Sigmoid colon (tissue), 7 donors: ENCODE measurements at regions of chr4 and their contacts with region 1.

Region 1: DNA sequence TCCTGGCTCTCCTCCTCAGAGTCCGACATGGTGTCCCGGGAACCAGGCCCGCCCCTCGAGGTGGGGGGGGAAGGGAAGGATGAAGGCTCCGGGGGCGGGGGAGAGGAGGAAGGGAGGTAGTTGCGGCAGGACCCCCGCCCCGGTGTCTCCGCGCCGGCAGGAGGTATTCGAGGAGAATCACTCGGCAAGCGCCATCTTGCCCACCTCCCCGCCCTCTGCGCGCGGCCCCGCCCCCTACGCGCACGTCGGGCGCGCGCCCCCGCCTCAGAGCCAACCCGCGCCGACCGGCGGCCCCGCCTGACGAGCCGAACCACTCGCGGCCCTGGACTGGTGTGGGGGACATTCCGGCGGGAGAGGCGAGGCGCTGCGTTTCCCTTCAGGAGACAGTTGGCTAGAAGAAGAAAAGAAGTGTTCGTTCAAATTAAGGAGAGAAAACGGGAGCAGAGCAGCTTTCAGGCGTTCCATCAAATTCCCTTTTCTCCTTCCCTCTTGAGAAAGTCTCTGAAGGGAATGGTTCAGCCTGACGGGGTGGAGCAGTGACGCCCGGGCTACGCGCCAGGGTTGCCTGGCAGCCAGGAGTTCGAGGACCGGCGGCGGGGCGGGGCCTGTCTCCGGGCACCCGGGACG is at the start of gene RAB28:
- DNase-seq: peak; percentile 98
- H3K4me3 ChIP-seq: peak within 1 kb of the TSS; percentile 80 to 92 (median 90)
- H3K27ac ChIP-seq: peak within 1 kb of the TSS; percentile 95 to 97 (median 96)
- H3K4me1 ChIP-seq: peaks cover 0 to 33% (median 17%) of the 10 kb centered on the region in 4 donors
- H3K27me3 ChIP-seq: no peaks in the 10 kb centered on the region
- CTCF ChIP-seq: no peak
- EP300 ChIP-seq: no peak
- POLR2A ChIP-seq: peak; percentile 45 to 68
- total RNA-seq, gene RAB28: 24.1 to 32.1 (median 28.7) TPM

Region 2: DNA sequence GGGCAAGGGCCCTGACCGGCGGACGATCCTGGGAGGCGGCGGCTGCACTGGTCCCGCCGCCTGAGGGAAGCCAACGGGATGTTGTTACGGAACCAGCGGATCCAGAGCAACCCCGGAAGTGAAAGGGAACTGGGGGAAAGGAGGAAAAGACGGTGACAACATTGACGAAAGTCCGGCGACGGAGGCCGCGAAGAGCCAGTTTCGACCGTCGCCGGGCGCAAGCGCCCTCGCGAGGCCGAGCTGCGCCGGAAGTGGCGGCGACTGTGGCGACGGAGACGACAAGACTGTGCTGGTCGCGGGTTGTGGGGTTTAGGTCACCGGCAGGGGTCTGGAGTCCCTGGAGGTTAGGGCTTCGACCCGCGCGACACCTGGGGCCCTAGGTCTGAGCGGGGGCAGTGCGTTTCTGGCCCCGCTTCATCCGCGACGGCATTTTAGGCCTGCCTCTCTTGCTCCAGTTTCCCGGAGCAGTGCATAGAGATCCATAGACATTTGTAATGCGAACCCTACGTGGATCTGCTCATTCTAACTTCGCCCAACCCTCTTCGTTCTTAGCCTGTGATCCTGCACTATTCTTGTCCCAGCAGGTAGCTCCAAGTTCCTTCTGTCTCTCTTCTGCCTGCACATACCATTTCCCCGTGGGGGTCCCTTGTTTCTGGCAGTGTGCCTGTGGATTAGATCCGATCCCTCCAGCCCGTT is 143.5 kb after region 1 on chr4 and contains the start of gene BOD1L1:
- intact Hi-C with region 1: loop called (anchors 10 kb)
- DNase-seq: peak; percentile 94
- H3K4me3 ChIP-seq: peak within 1 kb of the TSS; percentile 82 to 89 (median 86)
- H3K27ac ChIP-seq: peak within 1 kb of the TSS; percentile 91 to 96 (median 95)
- H3K4me1 ChIP-seq: peaks cover 0 to 39% (median 29%) of the 10 kb centered on the region in 4 donors
- H3K27me3 ChIP-seq: no peaks in the 10 kb centered on the region
- CTCF ChIP-seq: peak in 1 of 4 experiments; percentile 34
- EP300 ChIP-seq: peak in 2 of 4 donors; percentile 60 to 87
- POLR2A ChIP-seq: peak; percentile 85 to 91
- total RNA-seq, gene BOD1L1: 34.3 to 46.0 (median 40.7) TPM

Region 3: GRCh38 chr4:15173251-15173650 is 1689.0 kb after region 1 on chr4:
- intact Hi-C with region 1: no loop called
- DNase-seq: no peak
- H3K4me3 ChIP-seq: no peak overlapping the region
- H3K27ac ChIP-seq: no peak overlapping the region
- H3K4me1 ChIP-seq: no peaks in the 10 kb centered on the region
- H3K27me3 ChIP-seq: no peaks in the 10 kb centered on the region
- CTCF ChIP-seq: no peak
- EP300 ChIP-seq: no peak
- POLR2A ChIP-seq: no peak